ENCODE measurements at regions of chr3 and their contacts with region 1.

Region 1: DNA sequence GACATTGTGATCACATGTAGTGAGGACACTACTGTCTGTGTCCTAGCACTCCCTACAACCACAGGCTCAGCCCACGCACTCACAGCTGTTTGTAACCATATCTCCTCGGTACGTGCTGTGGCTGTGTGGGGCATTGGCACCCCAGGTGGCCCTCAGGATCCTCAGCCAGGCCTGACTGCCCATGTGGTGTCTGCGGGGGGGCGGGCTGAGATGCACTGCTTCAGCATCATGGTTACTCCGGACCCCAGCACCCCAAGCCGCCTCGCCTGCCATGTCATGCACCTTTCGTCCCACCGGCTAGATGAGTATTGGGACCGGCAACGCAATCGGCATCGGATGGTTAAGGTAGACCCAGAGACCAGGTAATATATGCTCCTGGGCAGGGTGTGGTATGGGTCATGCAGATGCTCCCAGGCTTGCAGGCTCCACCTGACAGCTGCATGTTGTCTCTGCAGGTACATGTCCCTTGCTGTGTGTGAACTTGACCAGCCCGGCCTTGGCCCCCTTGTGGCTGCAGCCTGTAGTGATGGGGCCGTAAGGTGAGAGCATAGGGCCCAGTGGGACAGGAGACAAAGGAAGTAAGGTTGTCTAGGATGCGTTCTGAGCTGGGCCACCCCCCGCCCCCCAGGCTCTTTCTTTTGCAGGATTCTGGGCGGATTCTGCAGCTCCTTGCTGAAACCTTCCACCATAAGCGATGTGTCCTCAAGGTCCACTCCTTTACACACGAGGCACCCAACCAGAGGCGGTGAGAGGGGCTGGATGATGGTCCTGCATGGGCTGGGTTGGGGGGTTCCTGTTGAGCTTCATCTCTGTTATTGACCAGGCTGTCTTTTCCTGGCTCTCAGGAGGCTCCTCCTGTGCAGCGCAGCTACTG is 4.4 kb downstream of the DALRD3 start:
- DNase-seq: peak; percentile 50 to 64 (median 61)
- H3K4me3 ChIP-seq: no peak overlapping the region
- H3K27ac ChIP-seq: no peak overlapping the region
- H3K4me1 ChIP-seq: peaks cover 0 to 18% (median 15%) of the 10 kb centered on the region in 4 experiments
- H3K27me3 ChIP-seq: no peaks in the 10 kb centered on the region

Region 2: GRCh38 chr3:48997102-48997635 is 16.8 kb before region 1 on chr3:
- CTCF ChIA-PET with region 1: interaction called, 386 read pairs
- POLR2A ChIA-PET with region 1: interaction called, 69 read pairs
- DNase-seq: peak in 1 of 3 donors; percentile 41
- H3K4me3 ChIP-seq: no peak overlapping the region
- H3K27ac ChIP-seq: no peak overlapping the region
- H3K4me1 ChIP-seq: peaks cover 0 to 12% (median 10%) of the 10 kb centered on the region in 4 experiments
- H3K27me3 ChIP-seq: no peaks in the 10 kb centered on the region

Region 3: GRCh38 chr3:49283997-49284396 is 270.0 kb after region 1 on chr3:
- CTCF ChIA-PET with region 1: no interaction called
- POLR2A ChIA-PET with region 1: no interaction called
- DNase-seq: no peak
- H3K4me3 ChIP-seq: no peak overlapping the region
- H3K27ac ChIP-seq: no peak overlapping the region
- H3K4me1 ChIP-seq: peaks cover 0 to 5% (median 3%) of the 10 kb centered on the region in 4 experiments
- H3K27me3 ChIP-seq: no peaks in the 10 kb centered on the region

Region 4: DNA sequence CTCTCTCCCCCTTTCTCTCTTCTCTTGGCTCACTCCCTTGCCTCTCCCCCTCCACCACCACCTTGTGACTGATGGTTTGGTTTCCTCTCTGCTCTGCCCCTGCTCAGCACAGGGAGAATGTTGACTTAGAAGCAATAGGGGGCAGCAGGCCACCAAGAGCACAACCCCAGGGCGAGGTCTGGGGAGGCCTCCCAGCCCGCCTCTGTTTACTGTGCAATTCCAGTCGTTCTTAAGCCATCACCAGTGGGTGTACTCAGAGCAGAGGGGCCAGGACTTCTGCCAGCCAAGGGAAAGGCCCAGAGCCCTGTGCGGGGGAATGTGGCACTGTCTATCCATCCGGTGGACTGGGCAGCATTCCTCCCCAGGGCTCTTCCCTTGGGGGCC is 654.4 kb after region 1 on chr3:
- CTCF ChIA-PET with region 1: no interaction called
- POLR2A ChIA-PET with region 1: no interaction called
- DNase-seq: peak in 2 of 3 donors; percentile 27 to 39
- H3K4me3 ChIP-seq: no peak overlapping the region
- H3K27ac ChIP-seq: no peak overlapping the region
- H3K4me1 ChIP-seq: peaks cover 0 to 14% (median 10%) of the 10 kb centered on the region in 4 experiments
- H3K27me3 ChIP-seq: no peaks in the 10 kb centered on the region

Measured in common myeloid progenitor, CD34-positive (primary cell).